AG04449 (cell line): ENCODE measurements at regions of chr5 and their contacts with region 1.

Region 1: GRCh38 chr5:130109152-130109551 is 204.9 kb downstream of the CHSY3 start:
- DNase-seq: no peak
- H3K4me3 ChIP-seq: no peak overlapping the region
- CTCF ChIP-seq: peak; percentile 40

Region 2: GRCh38 chr5:130126746-130127145 is 17.6 kb after region 1 on chr5:
- CTCF ChIA-PET with region 1: interaction called, 39 read pairs
- POLR2A ChIA-PET with region 1: no interaction called
- DNase-seq: no peak
- H3K4me3 ChIP-seq: no peak overlapping the region
- CTCF ChIP-seq: no peak

Region 3: GRCh38 chr5:130135506-130135905 is 26.4 kb after region 1 on chr5:
- CTCF ChIA-PET with region 1: interaction called, 55 read pairs
- POLR2A ChIA-PET with region 1: no interaction called
- DNase-seq: no peak
- H3K4me3 ChIP-seq: no peak overlapping the region
- CTCF ChIP-seq: no peak

Region 4: DNA sequence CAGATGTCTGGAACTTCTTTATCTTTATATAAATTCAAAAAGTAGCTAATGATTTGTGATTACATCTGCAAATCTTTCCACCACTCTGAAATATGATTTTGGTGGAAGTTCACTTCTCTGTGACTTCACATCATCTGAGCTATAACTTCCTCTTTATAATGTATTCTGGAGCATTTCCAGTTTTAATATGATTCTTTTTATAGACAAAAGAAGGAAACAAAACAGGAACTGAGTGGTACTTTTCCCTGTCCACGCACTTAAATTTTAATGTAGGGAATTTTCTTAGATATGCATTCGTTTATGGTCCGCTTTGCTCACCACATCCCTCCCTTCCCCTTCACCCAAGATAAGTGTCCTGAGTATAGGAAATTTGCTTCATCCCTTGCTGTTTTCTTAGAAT is 128.6 kb after region 1 on chr5:
- CTCF ChIA-PET with region 1: no interaction called
- POLR2A ChIA-PET with region 1: no interaction called
- DNase-seq: no peak
- H3K4me3 ChIP-seq: no peak overlapping the region
- CTCF ChIP-seq: no peak